Breast epithelium (tissue), 4 donors: ENCODE measurements at regions of chr2 and their contacts with region 1.

Region 1: DNA sequence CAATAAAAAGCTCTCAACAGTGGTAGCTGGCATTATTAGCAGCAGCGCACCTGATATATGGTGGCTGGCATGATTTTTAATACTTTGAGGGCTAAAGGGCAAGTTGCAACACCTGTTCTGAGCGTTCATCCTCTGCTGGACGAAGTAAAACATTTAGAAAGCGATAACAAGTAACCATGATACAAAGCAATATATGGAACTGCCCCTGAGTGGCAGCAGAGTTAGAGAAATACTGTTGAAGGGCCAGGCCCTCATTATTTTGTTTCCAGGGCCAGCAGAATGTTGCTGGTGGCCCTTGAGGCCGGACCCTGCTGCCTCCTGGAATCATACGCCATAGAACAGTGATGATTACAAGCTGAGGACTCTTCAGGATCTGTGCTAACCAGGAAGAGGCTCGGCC is 47.8 kb downstream of the ARHGEF4 start:
- DNase-seq: no peak
- H3K4me3 ChIP-seq: no peak overlapping the region
- H3K27ac ChIP-seq: no peak overlapping the region
- H3K4me1 ChIP-seq: no peaks in the 10 kb centered on the region
- H3K27me3 ChIP-seq: no peaks in the 10 kb centered on the region
- CTCF ChIP-seq: no peak
- POLR2A ChIP-seq: no peak

Region 2: GRCh38 chr2:129885736-129886135 is 998.8 kb before region 1 on chr2:
- intact Hi-C with region 1: no loop called
- DNase-seq: no peak
- H3K4me3 ChIP-seq: no peak overlapping the region
- H3K27ac ChIP-seq: no peak overlapping the region
- H3K4me1 ChIP-seq: no peaks in the 10 kb centered on the region
- H3K27me3 ChIP-seq: no peaks in the 10 kb centered on the region
- CTCF ChIP-seq: no peak
- POLR2A ChIP-seq: no peak

Region 3: DNA sequence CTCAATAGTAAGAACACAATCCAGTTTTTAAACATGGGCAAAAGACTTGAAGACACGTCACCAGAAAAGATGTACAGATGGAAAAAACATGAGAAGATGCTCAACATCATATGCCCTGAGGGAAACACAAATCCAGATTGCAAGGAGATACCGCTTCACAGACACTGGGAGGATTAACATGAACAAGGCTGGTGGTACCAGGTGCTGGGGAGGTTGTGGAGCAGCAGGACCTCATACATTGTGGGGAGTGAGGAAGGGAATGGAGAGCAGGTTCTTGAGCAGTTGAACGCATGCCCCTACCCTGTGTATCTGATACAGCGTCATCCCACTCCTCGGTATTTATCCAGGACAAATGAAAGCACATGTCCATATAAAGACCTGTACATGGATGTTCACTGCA is 24.3 kb after region 1 on chr2:
- intact Hi-C with region 1: loop called (anchors 1 kb)
- DNase-seq: no peak
- H3K4me3 ChIP-seq: no peak overlapping the region
- H3K27ac ChIP-seq: no peak overlapping the region
- H3K4me1 ChIP-seq: no peaks in the 10 kb centered on the region
- H3K27me3 ChIP-seq: no peaks in the 10 kb centered on the region
- CTCF ChIP-seq: no peak
- POLR2A ChIP-seq: no peak